ENCODE measurements at regions of chr13 and their contacts with region 1.

Region 1: GRCh38 chr13:94950303-94950702 is 238.0 kb upstream of the SOX21 start:
- DNase-seq: no peak
- ATAC-seq: peak; percentile 65
- H3K4me3 Mint-ChIP-seq: no peak overlapping the region
- H3K27ac Mint-ChIP-seq: no peak overlapping the region
- H3K4me1 Mint-ChIP-seq: peaks cover 25% of the 10 kb centered on the region
- H3K27me3 Mint-ChIP-seq: peaks cover 3% of the 10 kb centered on the region
- CTCF ChIP-seq: no peak

Region 2: GRCh38 chr13:94967183-94968039 is 17.1 kb after region 1 on chr13:
- CTCF ChIA-PET with region 1: interaction called, 13 read pairs
- POLR2A ChIA-PET with region 1: no interaction called
- DNase-seq: peak; percentile 57
- ATAC-seq: peak; percentile 68
- H3K4me3 Mint-ChIP-seq: peak overlapping the region; percentile 87
- H3K27ac Mint-ChIP-seq: no peak overlapping the region
- H3K4me1 Mint-ChIP-seq: peaks cover 51% of the 10 kb centered on the region
- H3K27me3 Mint-ChIP-seq: peaks cover 16% of the 10 kb centered on the region
- CTCF ChIP-seq: no peak